OCI-LY7 (cell line): ENCODE measurements at regions of chr1 and their contacts with region 1.

Region 1: GRCh38 chr1:30730346-30731108 is 7.1 kb upstream of the MATN1 start:
- DNase-seq: peak; percentile 81
- H3K4me3 ChIP-seq: peak overlapping the region; percentile 2
- H3K27ac ChIP-seq: no peak overlapping the region
- H3K4me1 ChIP-seq: peaks cover 37% of the 10 kb centered on the region
- CTCF ChIP-seq: no peak

Region 2: GRCh38 chr1:30527511-30528140 is 202.9 kb before region 1 on chr1:
- CTCF ChIA-PET with region 1: no interaction called
- POLR2A ChIA-PET with region 1: no interaction called
- intact Hi-C with region 1: no loop called
- DNase-seq: no peak
- H3K4me3 ChIP-seq: no peak overlapping the region
- H3K27ac ChIP-seq: no peak overlapping the region
- H3K4me1 ChIP-seq: no peaks in the 10 kb centered on the region
- CTCF ChIP-seq: no peak

Region 3: DNA sequence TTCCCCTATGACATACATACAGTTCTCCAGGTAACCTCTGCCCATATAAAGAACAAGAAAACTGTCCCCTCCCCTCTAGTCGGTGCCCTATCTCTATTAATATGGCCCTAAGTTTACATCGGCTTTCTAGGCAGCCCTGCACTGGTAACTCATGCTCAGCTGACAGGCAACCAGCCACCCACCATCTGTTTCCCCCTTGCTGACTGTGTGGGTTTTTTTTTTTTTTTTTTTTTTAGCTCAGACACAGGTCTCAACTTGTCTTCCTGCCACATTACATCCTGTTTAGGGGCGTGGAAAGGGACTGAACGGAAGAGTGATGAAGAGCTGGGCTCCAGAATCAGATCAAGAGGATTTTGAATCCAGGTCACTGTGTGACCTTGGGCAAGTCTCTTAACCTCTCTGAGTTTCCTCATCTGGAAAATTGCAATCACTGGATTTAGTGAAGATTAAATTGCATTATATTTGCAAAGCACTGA is 13.1 kb after region 1 on chr1:
- CTCF ChIA-PET with region 1: interaction called, 3 read pairs
- POLR2A ChIA-PET with region 1: interaction called, 19 read pairs
- intact Hi-C with region 1: no loop called
- DNase-seq: peak; percentile 89
- H3K4me3 ChIP-seq: peak overlapping the region; percentile 31
- H3K27ac ChIP-seq: peak overlapping the region; percentile 74
- H3K4me1 ChIP-seq: peaks cover 85% of the 10 kb centered on the region
- CTCF ChIP-seq: no peak; the same call in 1 of the 2 replicates